Heart right ventricle (tissue), 16 donors: ENCODE measurements at regions of chr15 and their contacts with region 1.

Region 1: DNA sequence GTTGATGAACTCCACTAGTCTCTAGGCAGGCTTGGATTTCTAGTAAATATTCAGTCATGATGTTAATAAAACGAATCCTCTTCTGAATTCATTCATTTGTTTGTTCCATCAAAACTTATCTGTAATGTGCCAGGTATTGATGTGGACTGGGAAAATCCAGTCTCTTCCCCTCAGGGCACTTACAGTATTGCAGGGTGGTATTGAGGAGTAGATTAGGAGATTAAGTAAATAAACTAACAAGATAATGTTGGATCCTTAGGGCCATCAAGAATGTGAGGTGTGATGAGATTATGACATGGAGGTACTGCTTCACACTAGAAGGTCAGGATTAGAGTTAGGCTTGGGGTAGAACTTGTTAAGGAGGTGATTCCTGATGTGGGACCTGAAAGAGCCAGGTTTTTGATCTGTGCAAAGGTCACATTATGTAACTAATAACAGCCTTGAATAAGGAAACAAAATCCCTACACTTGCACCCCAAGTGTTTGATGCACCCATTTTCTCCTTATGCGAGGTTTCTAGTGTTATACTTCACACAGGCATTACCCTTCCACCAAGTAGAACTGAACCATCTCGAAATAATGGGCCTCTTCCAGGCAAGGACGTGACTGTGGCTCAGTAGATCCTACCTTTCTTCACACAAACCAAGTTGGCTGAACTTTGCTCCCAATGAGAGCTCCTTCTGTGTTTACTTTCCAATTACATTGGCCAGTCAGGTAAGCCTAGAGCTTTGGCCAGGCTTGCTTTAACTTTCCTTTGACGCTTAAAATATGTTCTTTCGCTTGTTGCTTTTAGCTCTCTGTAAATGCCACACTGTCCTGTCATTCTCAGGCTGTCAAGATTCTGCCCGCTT is 16.7 kb downstream of the MCTP2 start:
- DNase-seq: no peak
- ATAC-seq: no peak
- H3K4me3 ChIP-seq: no peak overlapping the region
- H3K27ac ChIP-seq: no peak overlapping the region
- H3K4me1 ChIP-seq: peaks cover 0 to 9% (median 0%) of the 10 kb centered on the region in 9 donors
- H3K27me3 ChIP-seq: peaks cover 0 to 7% (median 0%) of the 10 kb centered on the region in 7 donors
- CTCF ChIP-seq: no peak

Region 2: GRCh38 chr15:93862791-93863190 is 385.2 kb before region 1 on chr15:
- intact Hi-C with region 1: no loop called
- DNase-seq: peak in 1 of 2 donors; percentile 20
- ATAC-seq: peak in 6 of 8 donors; percentile 18 to 67 (median 52)
- H3K4me3 ChIP-seq: peak overlapping the region in 1 of 10 donors; percentile 15
- H3K27ac ChIP-seq: peak overlapping the region in 5 of 10 donors; percentile 29 to 84 (median 49)
- H3K4me1 ChIP-seq: peaks cover 0 to 49% (median 0%) of the 10 kb centered on the region in 9 donors
- H3K27me3 ChIP-seq: no peaks in the 10 kb centered on the region
- CTCF ChIP-seq: no peak

Region 3: GRCh38 chr15:94042180-94042928 is 205.7 kb before region 1 on chr15:
- intact Hi-C with region 1: no loop called
- DNase-seq: no peak
- ATAC-seq: peak in 2 of 8 donors; percentile 30 to 41
- H3K4me3 ChIP-seq: no peak overlapping the region
- H3K27ac ChIP-seq: no peak overlapping the region
- H3K4me1 ChIP-seq: no peaks in the 10 kb centered on the region
- H3K27me3 ChIP-seq: no peaks in the 10 kb centered on the region
- CTCF ChIP-seq: no peak

Region 4: DNA sequence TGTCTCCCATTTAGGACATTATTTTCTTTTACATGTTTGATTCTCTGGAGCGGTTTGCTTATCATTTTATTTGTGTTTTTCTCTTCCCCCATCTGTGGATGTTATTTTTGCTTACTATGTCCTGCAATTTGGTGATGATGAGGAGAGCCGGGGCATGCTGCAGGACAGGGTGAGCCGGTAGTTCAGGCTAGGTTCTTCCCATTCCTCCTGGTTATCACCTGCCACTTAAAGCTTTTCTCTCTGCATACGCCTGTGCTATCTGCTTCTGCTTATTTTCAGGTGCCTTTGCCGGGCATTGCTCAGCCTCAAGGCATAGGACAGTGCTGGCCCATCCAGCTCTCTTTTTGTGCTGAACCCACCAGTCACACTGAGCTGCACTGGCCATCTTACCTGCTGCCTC is 69.2 kb after region 1 on chr15:
- intact Hi-C with region 1: loop called in 1 of 10 experiments (anchors 10 kb)
- DNase-seq: no peak
- ATAC-seq: no peak
- H3K4me3 ChIP-seq: no peak overlapping the region
- H3K27ac ChIP-seq: no peak overlapping the region
- H3K4me1 ChIP-seq: peaks cover 0 to 4% (median 0%) of the 10 kb centered on the region in 9 donors
- H3K27me3 ChIP-seq: peaks cover 0 to 7% (median 0%) of the 10 kb centered on the region in 7 donors
- CTCF ChIP-seq: no peak